K562 (cell line): ENCODE measurements at regions of chr1 and their contacts with region 1.

Region 1: DNA sequence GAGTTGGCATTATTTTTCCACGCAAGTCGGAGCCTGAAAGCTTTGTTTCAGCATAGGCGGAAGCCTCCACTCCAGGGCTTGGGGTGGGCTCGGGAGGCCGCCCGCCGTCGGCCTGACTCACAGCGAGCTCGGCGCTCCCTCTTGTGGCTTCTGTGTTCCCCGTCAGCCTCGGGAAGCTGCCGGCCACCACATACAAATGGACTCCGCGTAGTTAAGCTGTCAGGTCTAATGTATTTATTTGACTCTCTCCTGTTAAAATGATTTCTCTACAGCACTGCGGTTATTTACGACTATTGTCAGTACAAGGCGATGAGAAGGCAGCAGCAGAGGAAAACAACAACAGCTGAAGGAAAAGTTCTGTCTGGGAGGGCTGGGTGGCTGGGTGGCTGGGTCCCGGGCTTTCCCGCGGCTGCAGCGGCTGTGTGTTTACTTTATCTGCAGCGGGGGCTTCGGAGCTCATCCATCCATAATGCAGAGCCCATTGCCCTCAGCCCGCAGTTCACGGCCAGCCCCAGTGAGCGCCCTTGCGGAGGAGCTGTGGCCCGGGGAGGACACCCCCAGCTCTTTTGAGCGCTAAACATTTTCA is 375.7 kb upstream of the CAMK1G start:
- DNase-seq: peak; percentile 38 to 60 (median 44)
- ATAC-seq: peak; percentile 98
- H3K4me3 ChIP-seq: no peak overlapping the region
- H3K27ac ChIP-seq: no peak overlapping the region
- H3K4me1 ChIP-seq: peaks cover 0 to 6% of the 10 kb centered on the region in 2 experiments; a peak in 1 of 5 replicates
- H3K27me3 ChIP-seq: peaks cover 0 to 19% of the 10 kb centered on the region in 2 experiments; a peak in 3 of 5 replicates
- CTCF ChIP-seq: peak; percentile 66 to 72 (median 68)
- EP300 ChIP-seq: no peak
- POLR2A ChIP-seq: no peak
- RAD21 ChIP-seq: peak; percentile 21 to 63; a peak in 2 of 4 replicates

Region 2: GRCh38 chr1:208007938-208008342 is 1199.9 kb before region 1 on chr1:
- CTCF ChIA-PET with region 1: no interaction called
- POLR2A ChIA-PET with region 1: no interaction called
- in situ Hi-C with region 1: loop called (anchors 25 kb)
- intact Hi-C with region 1: no loop called
- DNase-seq: no peak
- ATAC-seq: no peak
- H3K4me3 ChIP-seq: no peak overlapping the region
- H3K27ac ChIP-seq: no peak overlapping the region
- H3K4me1 ChIP-seq: no peaks in the 10 kb centered on the region
- H3K27me3 ChIP-seq: peaks cover 31 to 71% of the 10 kb centered on the region in 2 experiments; a peak in 4 of 5 replicates
- CTCF ChIP-seq: no peak
- EP300 ChIP-seq: no peak
- POLR2A ChIP-seq: no peak
- RAD21 ChIP-seq: no peak

Region 3: DNA sequence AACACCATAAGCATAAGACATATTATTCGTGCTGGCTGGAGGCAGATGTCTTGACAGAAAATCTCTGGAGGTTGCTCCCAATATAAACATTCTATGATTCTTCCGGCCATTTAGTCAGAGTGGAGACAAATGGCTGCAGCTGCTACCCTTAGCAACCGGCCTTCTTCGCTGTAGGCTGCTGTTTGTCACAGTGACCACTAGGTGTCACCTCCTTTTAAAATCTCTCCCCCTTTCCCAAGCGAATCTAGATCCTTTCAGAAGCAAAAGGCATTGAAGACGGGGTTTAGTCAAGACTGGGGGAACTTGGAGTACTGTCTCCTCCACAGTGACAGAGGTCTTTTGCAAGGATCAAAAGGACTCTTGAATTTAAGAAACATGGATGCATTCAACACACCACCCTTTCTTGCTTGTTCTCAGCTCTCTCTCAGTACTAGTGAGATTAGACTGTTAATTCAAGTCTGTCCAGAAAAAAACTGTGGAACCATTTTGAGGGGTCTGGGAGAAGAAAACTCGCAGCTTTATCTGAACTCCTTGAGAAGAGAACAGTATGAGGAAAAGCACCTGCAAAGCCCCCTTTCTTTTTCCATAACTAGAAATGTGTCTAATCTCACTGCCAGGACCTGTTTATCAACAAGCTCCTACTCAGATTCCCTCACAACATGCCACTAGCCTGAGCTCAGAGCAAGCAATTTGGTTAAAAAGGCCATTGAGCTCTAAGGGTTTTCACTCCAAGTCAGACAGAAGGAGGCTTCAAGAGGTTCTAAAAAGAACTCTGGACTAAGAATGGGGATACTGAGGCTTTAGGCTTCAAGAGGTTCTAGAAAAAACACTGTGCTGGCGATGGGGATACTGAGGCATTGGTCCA is 555.3 kb before region 1 on chr1:
- CTCF ChIA-PET with region 1: interaction called, 3 read pairs
- POLR2A ChIA-PET with region 1: no interaction called
- in situ Hi-C with region 1: no loop called
- intact Hi-C with region 1: loop called (anchors 1 kb)
- DNase-seq: peak; percentile 51 to 70 (median 59)
- ATAC-seq: peak; percentile 98
- H3K4me3 ChIP-seq: no peak overlapping the region
- H3K27ac ChIP-seq: no peak overlapping the region
- H3K4me1 ChIP-seq: no peaks in the 10 kb centered on the region
- H3K27me3 ChIP-seq: no peaks in the 10 kb centered on the region
- CTCF ChIP-seq: peak; percentile 61 to 82 (median 77)
- EP300 ChIP-seq: no peak
- POLR2A ChIP-seq: no peak
- RAD21 ChIP-seq: peak; percentile 40 to 66; a peak in 3 of 4 replicates

Region 4: GRCh38 chr1:209354111-209354839 is 146.5 kb after region 1 on chr1:
- CTCF ChIA-PET with region 1: no interaction called
- POLR2A ChIA-PET with region 1: no interaction called
- in situ Hi-C with region 1: no loop called
- intact Hi-C with region 1: loop called (anchors 2 kb)
- DNase-seq: peak; percentile 71 to 85 (median 72)
- ATAC-seq: peak; percentile 100
- H3K4me3 ChIP-seq: no peak overlapping the region
- H3K27ac ChIP-seq: no peak overlapping the region
- H3K4me1 ChIP-seq: no peaks in the 10 kb centered on the region
- H3K27me3 ChIP-seq: no peaks in the 10 kb centered on the region
- CTCF ChIP-seq: peak; percentile 82 to 90 (median 88)
- EP300 ChIP-seq: no peak
- POLR2A ChIP-seq: no peak
- RAD21 ChIP-seq: peak; percentile 51 to 75

Region 5: GRCh38 chr1:209368864-209369598 is 161.2 kb after region 1 on chr1:
- CTCF ChIA-PET with region 1: no interaction called
- POLR2A ChIA-PET with region 1: no interaction called
- in situ Hi-C with region 1: no loop called
- intact Hi-C with region 1: no loop called
- DNase-seq: no peak
- ATAC-seq: no peak
- H3K4me3 ChIP-seq: no peak overlapping the region
- H3K27ac ChIP-seq: no peak overlapping the region
- H3K4me1 ChIP-seq: no peaks in the 10 kb centered on the region
- H3K27me3 ChIP-seq: no peaks in the 10 kb centered on the region
- CTCF ChIP-seq: no peak
- EP300 ChIP-seq: no peak
- POLR2A ChIP-seq: no peak
- RAD21 ChIP-seq: no peak

Region 6: DNA sequence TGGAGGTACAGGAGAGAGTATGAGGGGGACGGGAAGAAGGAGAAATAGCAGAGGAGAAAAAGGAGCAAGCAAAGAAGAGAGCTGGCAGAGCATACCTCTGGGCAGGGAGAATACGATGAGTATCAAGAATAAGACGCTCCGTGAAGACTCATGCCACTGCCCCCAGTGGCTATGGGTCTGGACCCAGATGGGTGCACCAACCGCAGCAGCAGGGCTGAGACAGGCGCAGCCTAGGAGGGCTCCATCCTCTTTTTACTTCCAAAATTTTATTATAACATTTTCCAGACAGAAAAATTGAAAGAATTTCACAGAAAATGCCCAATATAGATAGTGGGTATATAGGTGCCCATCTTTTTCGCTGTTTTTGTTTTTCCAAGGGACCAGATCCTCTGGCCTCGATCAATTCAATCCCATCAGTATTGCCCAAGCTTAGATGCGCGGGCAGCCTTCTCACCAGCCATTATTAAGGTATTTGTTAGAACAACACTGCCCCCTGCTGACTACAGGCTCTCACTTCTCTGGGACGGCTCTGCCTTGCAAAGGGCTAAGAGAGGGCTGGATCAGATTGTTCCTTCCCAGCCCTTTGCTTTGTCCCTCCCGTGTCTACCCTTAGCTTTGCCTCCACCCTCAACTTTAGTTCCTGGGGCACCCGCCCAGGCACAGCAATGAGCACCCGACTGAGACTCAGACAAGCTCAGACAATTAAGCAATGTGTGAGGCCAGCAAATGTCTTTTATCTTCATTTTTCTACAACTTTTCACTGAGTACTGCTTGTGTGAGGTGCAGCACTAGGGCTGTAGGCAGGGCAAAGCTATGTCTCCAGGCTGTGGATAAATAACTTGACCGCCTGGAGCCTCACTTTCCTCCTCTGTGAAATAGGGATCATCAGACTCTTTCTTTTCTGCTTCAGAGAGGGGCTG is 358.2 kb after region 1 on chr1:
- CTCF ChIA-PET with region 1: no interaction called
- POLR2A ChIA-PET with region 1: no interaction called
- in situ Hi-C with region 1: no loop called
- intact Hi-C with region 1: loop called (anchors 2 kb)
- DNase-seq: peak; percentile 72 to 86 (median 74)
- ATAC-seq: peak; percentile 97
- H3K4me3 ChIP-seq: no peak overlapping the region
- H3K27ac ChIP-seq: no peak overlapping the region
- H3K4me1 ChIP-seq: no peaks in the 10 kb centered on the region
- H3K27me3 ChIP-seq: peaks cover 4 to 18% of the 10 kb centered on the region in 2 experiments; a peak in 3 of 5 replicates
- CTCF ChIP-seq: peak; percentile 75 to 88 (median 87)
- EP300 ChIP-seq: no peak
- POLR2A ChIP-seq: no peak
- RAD21 ChIP-seq: peak; percentile 58 to 76